Lower leg skin (tissue), 4 donors: ENCODE measurements at regions of chr5 and their contacts with region 1.

Region 1: GRCh38 chr5:40191150-40191549 is 488.6 kb upstream of the PTGER4 start:
- DNase-seq: no peak
- H3K4me3 ChIP-seq: no peak overlapping the region
- CTCF ChIP-seq: no peak
- POLR2A ChIP-seq: no peak

Region 2: GRCh38 chr5:39775458-39776365 is 415.4 kb before region 1 on chr5:
- intact Hi-C with region 1: no loop called
- DNase-seq: no peak
- H3K4me3 ChIP-seq: no peak overlapping the region
- CTCF ChIP-seq: no peak
- POLR2A ChIP-seq: no peak

Region 3: DNA sequence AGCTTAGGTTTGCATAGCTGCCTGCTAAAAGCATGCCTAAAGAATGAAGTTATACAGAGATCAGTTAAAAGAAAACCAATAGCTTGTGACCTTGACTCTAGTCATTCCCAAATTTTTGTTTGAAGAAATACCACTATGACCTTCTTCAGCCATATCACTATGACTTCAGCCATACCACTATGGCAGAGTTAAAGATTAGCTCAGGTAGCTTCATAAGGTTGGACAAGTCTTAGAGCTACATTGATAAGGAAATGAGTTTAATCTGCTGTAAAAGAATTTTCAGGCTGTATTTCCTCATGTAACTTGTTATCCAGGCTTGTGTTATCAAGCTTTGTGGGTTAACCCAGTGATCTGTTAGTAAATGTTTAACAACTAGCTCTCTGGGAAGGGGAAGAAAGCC is 991.5 kb after region 1 on chr5:
- intact Hi-C with region 1: loop called (anchors 5 kb)
- DNase-seq: no peak
- H3K4me3 ChIP-seq: no peak overlapping the region
- CTCF ChIP-seq: no peak
- POLR2A ChIP-seq: no peak